CD8-positive, alpha-beta T cell (primary cell): ENCODE measurements at regions of chr9 and their contacts with region 1.

Region 1: GRCh38 chr9:72280913-72281500 is 84.0 kb downstream of the ZFAND5 start:
- DNase-seq: peak; percentile 36 to 81 (median 68)
- ATAC-seq: peak; percentile 87
- H3K4me3 ChIP-seq: no peak overlapping the region
- H3K4me3 Mint-ChIP-seq: no peak overlapping the region
- H3K27ac ChIP-seq: no peak overlapping the region
- H3K27ac Mint-ChIP-seq: no peak overlapping the region
- H3K4me1 ChIP-seq: no peaks in the 10 kb centered on the region
- H3K4me1 Mint-ChIP-seq: no peaks in the 10 kb centered on the region
- H3K27me3 ChIP-seq: no peaks in the 10 kb centered on the region
- H3K27me3 Mint-ChIP-seq: peaks cover 3% of the 10 kb centered on the region
- CTCF ChIP-seq: peak; percentile 92

Region 2: GRCh38 chr9:72292256-72292682 is 11.3 kb after region 1 on chr9:
- CTCF ChIA-PET with region 1: interaction called, 42 read pairs
- POLR2A ChIA-PET with region 1: interaction called, 3 read pairs
- intact Hi-C with region 1: no loop called
- DNase-seq: peak in 2 of 9 experiments; percentile 37 to 49
- ATAC-seq: no peak
- H3K4me3 ChIP-seq: no peak overlapping the region
- H3K4me3 Mint-ChIP-seq: no peak overlapping the region
- H3K27ac ChIP-seq: no peak overlapping the region
- H3K27ac Mint-ChIP-seq: no peak overlapping the region
- H3K4me1 ChIP-seq: no peaks in the 10 kb centered on the region
- H3K4me1 Mint-ChIP-seq: no peaks in the 10 kb centered on the region
- H3K27me3 ChIP-seq: no peaks in the 10 kb centered on the region
- H3K27me3 Mint-ChIP-seq: peaks cover 11% of the 10 kb centered on the region
- CTCF ChIP-seq: peak; percentile 68

Region 3: GRCh38 chr9:72599879-72600534 is 319.0 kb after region 1 on chr9:
- CTCF ChIA-PET with region 1: interaction called, 184 read pairs
- POLR2A ChIA-PET with region 1: no interaction called
- intact Hi-C with region 1: no loop called
- DNase-seq: no peak
- ATAC-seq: no peak
- H3K4me3 ChIP-seq: no peak overlapping the region
- H3K4me3 Mint-ChIP-seq: no peak overlapping the region
- H3K27ac ChIP-seq: no peak overlapping the region
- H3K27ac Mint-ChIP-seq: no peak overlapping the region
- H3K4me1 ChIP-seq: no peaks in the 10 kb centered on the region
- H3K4me1 Mint-ChIP-seq: no peaks in the 10 kb centered on the region
- H3K27me3 ChIP-seq: no peaks in the 10 kb centered on the region
- H3K27me3 Mint-ChIP-seq: peaks cover 4% of the 10 kb centered on the region
- CTCF ChIP-seq: no peak

Region 4: GRCh38 chr9:72763022-72763421 is 482.0 kb after region 1 on chr9:
- CTCF ChIA-PET with region 1: interaction called, 3 read pairs
- POLR2A ChIA-PET with region 1: no interaction called
- intact Hi-C with region 1: loop called in 1 of 2 experiments (anchors 10 kb)
- DNase-seq: no peak
- ATAC-seq: no peak
- H3K4me3 ChIP-seq: no peak overlapping the region
- H3K4me3 Mint-ChIP-seq: no peak overlapping the region
- H3K27ac ChIP-seq: no peak overlapping the region
- H3K27ac Mint-ChIP-seq: no peak overlapping the region
- H3K4me1 ChIP-seq: no peaks in the 10 kb centered on the region
- H3K4me1 Mint-ChIP-seq: no peaks in the 10 kb centered on the region
- H3K27me3 ChIP-seq: no peaks in the 10 kb centered on the region
- H3K27me3 Mint-ChIP-seq: peaks cover 7% of the 10 kb centered on the region
- CTCF ChIP-seq: no peak

Region 5: DNA sequence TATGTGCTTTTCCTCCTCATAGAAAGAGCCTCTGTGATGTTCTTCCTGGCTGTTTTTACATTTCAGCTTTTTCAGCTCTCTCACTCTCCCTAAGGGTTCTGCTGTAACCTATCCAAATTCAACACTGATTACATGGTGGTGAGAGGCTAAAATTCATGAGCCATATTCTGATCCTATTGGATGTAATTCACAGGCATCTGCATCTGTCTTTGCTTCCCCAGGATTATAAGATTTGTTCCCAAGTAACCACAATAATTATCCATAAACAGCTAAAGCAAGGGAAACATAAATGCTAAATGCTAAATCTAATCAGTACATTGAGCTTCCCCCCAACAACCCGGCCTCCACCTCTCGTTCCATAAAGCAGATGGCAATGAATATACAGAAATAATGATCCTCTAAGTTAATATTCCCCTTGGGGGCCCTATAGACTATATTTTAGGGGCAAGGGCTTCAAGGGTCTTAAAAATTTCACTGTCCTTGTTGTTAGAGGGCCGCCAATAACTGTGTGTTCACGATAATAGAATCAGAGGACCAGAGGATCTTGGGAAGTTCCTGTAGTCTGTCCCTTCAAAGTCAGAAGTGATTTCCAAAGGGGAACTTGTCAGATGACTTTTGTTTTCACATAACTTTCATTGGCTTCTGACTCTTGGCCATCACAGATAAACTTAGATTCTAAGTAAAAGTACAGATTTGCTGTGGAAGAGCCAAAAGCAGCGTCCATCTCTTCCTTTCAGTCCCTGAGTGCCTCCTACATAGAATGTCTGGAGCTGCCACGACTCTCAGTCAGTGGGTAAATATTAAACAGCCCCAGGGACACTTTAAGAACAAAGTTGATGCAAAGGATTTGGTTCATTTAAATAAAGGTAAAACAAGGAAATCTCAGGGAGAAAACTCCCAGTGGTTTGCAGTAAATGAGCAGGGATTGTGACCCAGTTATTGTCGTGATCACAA is 546.3 kb after region 1 on chr9:
- CTCF ChIA-PET with region 1: interaction called, 8 read pairs
- POLR2A ChIA-PET with region 1: no interaction called
- intact Hi-C with region 1: loop called (anchors 1 to 5 kb)
- DNase-seq: no peak
- ATAC-seq: no peak
- H3K4me3 ChIP-seq: no peak overlapping the region
- H3K4me3 Mint-ChIP-seq: no peak overlapping the region
- H3K27ac ChIP-seq: no peak overlapping the region
- H3K27ac Mint-ChIP-seq: no peak overlapping the region
- H3K4me1 ChIP-seq: no peaks in the 10 kb centered on the region
- H3K4me1 Mint-ChIP-seq: no peaks in the 10 kb centered on the region
- H3K27me3 ChIP-seq: peaks cover 0 to 2% of the 10 kb centered on the region in 2 experiments
- H3K27me3 Mint-ChIP-seq: no peaks in the 10 kb centered on the region
- CTCF ChIP-seq: no peak

Region 6: GRCh38 chr9:73023025-73023541 is 742.1 kb after region 1 on chr9:
- CTCF ChIA-PET with region 1: interaction called, 38 read pairs
- POLR2A ChIA-PET with region 1: no interaction called
- intact Hi-C with region 1: loop called in 1 of 2 experiments (anchors 5 kb)
- DNase-seq: peak in 7 of 9 experiments; percentile 17 to 71 (median 52)
- ATAC-seq: peak; percentile 46
- H3K4me3 ChIP-seq: no peak overlapping the region
- H3K4me3 Mint-ChIP-seq: no peak overlapping the region
- H3K27ac ChIP-seq: no peak overlapping the region
- H3K27ac Mint-ChIP-seq: no peak overlapping the region
- H3K4me1 ChIP-seq: peaks cover 3% of the 10 kb centered on the region
- H3K4me1 Mint-ChIP-seq: peaks cover 6% of the 10 kb centered on the region
- H3K27me3 ChIP-seq: no peaks in the 10 kb centered on the region
- H3K27me3 Mint-ChIP-seq: peaks cover 19% of the 10 kb centered on the region
- CTCF ChIP-seq: peak; percentile 53

Region 7: GRCh38 chr9:73081979-73082657 is 801.1 kb after region 1 on chr9:
- CTCF ChIA-PET with region 1: interaction called, 5 read pairs
- POLR2A ChIA-PET with region 1: no interaction called
- intact Hi-C with region 1: loop called in 1 of 2 experiments (anchors 1 kb)
- DNase-seq: peak in 2 of 9 experiments; percentile 33 to 43
- ATAC-seq: no peak
- H3K4me3 ChIP-seq: no peak overlapping the region
- H3K4me3 Mint-ChIP-seq: no peak overlapping the region
- H3K27ac ChIP-seq: no peak overlapping the region
- H3K27ac Mint-ChIP-seq: no peak overlapping the region
- H3K4me1 ChIP-seq: no peaks in the 10 kb centered on the region
- H3K4me1 Mint-ChIP-seq: no peaks in the 10 kb centered on the region
- H3K27me3 ChIP-seq: peaks cover 0 to 2% of the 10 kb centered on the region in 2 experiments
- H3K27me3 Mint-ChIP-seq: peaks cover 12% of the 10 kb centered on the region
- CTCF ChIP-seq: peak; percentile 75